GM12878 (cell line): ENCODE measurements at regions of chr4 and their contacts with region 1.

Region 1: DNA sequence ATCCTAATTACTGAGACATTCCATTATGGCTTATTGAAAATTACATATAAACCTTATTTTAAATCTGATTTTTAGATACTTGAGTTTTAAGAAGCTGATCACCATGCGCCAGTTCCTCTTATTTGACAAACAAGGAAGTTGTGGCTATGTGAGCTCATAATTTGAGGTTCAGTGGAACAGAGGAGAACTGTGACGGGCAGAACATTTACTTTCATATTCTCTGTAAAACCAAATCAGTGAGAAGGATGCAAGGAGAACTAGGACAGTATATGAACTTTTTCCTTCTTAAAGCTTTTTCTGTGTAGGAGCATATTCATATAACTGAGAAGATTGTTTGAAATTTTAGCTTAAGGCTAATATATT is 25.3 kb downstream of the STIM2 start:
- DNase-seq: peak; percentile 65
- ATAC-seq: peak; percentile 81
- H3K4me3 ChIP-seq: peak overlapping the region; percentile 45; the same call in 1 of the 2 replicates
- H3K27ac ChIP-seq: peak overlapping the region; percentile 89
- H3K4me1 ChIP-seq: peaks cover 33% of the 10 kb centered on the region
- H3K27me3 ChIP-seq: no peaks in the 10 kb centered on the region
- CTCF ChIP-seq: no peak
- EP300 ChIP-seq: peak; percentile 29 to 81; a peak in 3 of 4 replicates
- POLR2A ChIP-seq: no peak
- RAD21 ChIP-seq: 0 out of 2 replicates have a peak, but pooled peaks have one; percentile 17

Region 2: DNA sequence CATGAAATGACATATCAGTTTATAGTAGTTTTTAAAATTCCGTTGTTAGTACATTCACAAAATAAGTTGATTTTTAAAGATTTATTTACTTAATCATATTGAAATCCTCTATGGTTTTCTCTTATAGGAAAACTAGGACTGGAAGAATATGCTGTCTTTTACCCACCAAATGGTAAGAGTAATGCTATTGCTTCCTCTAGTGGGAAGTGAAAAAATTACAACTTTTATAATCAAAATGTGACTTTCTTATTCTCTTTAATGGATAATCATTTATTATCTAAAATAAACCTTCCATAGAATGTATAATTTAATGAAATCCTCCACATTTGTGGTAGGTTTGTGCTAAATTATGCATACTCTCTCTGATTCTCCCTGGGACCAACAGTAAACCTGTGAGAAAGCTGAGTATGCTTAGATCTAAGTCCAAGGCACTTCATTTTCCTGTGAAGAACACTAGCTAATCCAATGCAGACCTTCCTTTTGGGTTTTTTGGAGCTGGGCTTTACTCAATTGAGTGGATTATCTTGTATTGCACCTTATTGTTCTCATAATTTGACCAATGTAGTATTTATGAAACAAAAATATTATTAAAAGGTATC is 165.8 kb before region 1 on chr4:
- CTCF ChIA-PET with region 1: no interaction called
- POLR2A ChIA-PET with region 1: no interaction called
- RAD21 ChIA-PET with region 1: no interaction called
- SMC1A ChIA-PET with region 1: no interaction called
- in situ Hi-C with region 1: no loop called
- intact Hi-C with region 1: no loop called
- DNase-seq: no peak
- ATAC-seq: no peak
- H3K4me3 ChIP-seq: no peak overlapping the region
- H3K27ac ChIP-seq: no peak overlapping the region
- H3K4me1 ChIP-seq: no peaks in the 10 kb centered on the region
- H3K27me3 ChIP-seq: no peaks in the 10 kb centered on the region
- CTCF ChIP-seq: peak in 2 of 3 experiments; percentile 34 to 40; a peak in 3 of 6 replicates
- EP300 ChIP-seq: no peak
- POLR2A ChIP-seq: no peak
- RAD21 ChIP-seq: peak; percentile 78

Region 3: DNA sequence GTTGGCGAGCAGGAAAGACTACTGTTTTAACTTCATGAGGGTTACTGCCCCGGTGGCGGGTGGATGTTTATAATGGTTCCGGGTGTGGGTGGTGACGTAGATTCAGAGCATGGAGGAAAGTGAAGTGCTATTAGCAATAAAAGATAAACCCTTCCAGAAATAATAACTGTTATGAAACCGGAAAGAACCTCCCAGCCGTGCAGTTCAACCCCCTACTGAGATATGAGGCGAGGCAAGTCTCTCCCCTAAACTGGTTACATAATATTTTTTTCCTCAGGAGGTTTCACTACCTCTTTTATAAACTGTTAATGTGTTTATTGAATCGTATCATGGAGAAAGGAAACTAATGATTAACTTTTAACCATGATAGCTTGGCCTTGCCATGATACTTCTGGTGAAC is 59.2 kb before region 1 on chr4:
- CTCF ChIA-PET with region 1: no interaction called
- POLR2A ChIA-PET with region 1: interaction called, 4 read pairs
- RAD21 ChIA-PET with region 1: interaction called, 12 read pairs
- SMC1A ChIA-PET with region 1: interaction called, 5 read pairs
- in situ Hi-C with region 1: no loop called
- intact Hi-C with region 1: no loop called
- DNase-seq: peak; percentile 72
- ATAC-seq: peak; percentile 94
- H3K4me3 ChIP-seq: 0 out of 2 replicates have a peak overlapping the region, but pooled peaks have one; percentile 31
- H3K27ac ChIP-seq: peak overlapping the region; percentile 20; the same call in 1 of the 2 replicates
- H3K4me1 ChIP-seq: peaks cover 21% of the 10 kb centered on the region
- H3K27me3 ChIP-seq: no peaks in the 10 kb centered on the region
- CTCF ChIP-seq: no peak
- EP300 ChIP-seq: peak; percentile 91 to 93
- POLR2A ChIP-seq: no peak
- RAD21 ChIP-seq: no peak

Region 4: DNA sequence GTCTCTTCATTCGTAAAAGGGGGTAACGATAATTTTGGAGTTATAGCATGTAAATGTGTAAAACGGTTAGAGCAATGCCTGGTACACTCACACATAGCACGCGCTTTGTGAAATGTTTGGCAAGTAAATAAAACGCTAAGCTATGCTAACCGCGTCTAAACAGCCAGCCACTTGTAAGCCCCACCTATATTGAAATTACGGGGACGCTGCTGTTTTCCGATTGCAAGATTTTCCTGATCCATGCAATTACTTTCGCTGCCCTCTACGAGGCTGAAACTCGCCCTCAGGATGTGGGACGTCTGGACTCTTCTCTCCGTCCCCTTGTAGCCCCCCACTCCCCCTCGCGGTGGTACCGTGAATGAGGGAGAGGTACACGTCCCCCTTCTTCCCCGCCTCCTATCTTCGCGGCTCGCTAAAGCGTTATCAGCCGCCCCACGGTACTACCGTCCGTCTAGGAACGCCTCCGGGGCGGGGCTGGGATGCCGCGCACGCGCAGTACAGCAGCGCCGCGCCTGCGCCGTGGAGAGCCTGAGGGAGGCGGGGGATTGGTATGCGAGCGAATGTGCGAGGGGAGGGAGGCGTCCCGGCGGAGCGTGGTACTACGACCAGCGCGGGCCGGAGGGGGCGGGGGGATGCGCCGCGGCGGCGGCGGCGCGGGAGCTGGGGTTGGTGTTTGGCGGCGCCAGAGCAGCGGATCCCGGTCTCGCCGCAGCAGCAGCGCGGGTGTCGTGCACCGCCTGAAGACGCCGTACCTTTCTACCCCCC is 25.6 kb before region 1 on chr4 and contains the start of gene STIM2:
- CTCF ChIA-PET with region 1: interaction called, 8 read pairs
- POLR2A ChIA-PET with region 1: interaction called, 51 read pairs
- RAD21 ChIA-PET with region 1: interaction called, 81 read pairs
- SMC1A ChIA-PET with region 1: interaction called, 116 read pairs
- in situ Hi-C with region 1: no loop called
- intact Hi-C with region 1: loop called (anchors 1 kb)
- DNase-seq: peak; percentile 91
- ATAC-seq: peak; percentile 71
- H3K4me3 ChIP-seq: peak within 1 kb of the TSS; percentile 84
- H3K27ac ChIP-seq: peak within 1 kb of the TSS; percentile 72
- H3K4me1 ChIP-seq: peaks cover 19% of the 10 kb centered on the region
- H3K27me3 ChIP-seq: no peaks in the 10 kb centered on the region
- CTCF ChIP-seq: peak; percentile 40 to 41 (median 41); a peak in 4 of 6 replicates
- EP300 ChIP-seq: no peak
- POLR2A ChIP-seq: peak; percentile 90
- RAD21 ChIP-seq: peak; percentile 58
- polyA plus RNA-seq, gene STIM2: 4.7 to 10.3 TPM

Region 5: DNA sequence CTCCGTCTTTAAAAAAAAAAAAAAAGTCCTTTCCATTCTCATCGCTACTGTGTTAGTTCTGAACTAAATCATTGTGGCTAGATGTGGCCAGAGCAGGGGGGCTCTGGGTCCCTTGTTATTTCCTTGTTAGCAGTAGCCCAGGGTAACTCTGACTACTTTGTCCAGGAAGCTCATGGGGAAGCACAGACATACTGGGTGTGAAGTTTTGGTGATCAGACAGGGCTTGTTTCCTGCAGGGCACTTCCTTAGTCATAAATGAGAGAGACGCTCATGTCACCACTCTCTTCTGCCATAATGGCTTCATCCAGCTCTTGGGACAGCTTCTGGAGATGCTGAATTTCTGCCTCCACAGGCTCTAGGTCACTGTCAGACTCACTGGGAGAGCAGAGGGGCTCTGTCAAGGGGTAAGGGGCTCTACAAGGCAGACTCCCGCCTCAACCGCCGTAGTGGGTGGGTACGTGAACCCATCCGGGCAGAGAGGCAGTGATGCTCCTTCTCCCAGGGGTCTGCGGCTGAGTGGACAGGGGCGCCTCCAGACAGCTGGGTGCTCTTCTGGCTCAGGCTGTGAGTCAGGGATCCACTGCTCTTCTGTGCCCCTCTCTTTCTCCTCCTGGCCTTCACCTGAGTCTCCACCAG is 12.4 kb before region 1 on chr4:
- CTCF ChIA-PET with region 1: interaction called, 7 read pairs
- POLR2A ChIA-PET with region 1: interaction called, 10 read pairs
- RAD21 ChIA-PET with region 1: interaction called, 81 read pairs
- SMC1A ChIA-PET with region 1: interaction called, 116 read pairs
- in situ Hi-C with region 1: no loop called
- intact Hi-C with region 1: no loop called
- DNase-seq: no peak
- ATAC-seq: peak; percentile 81
- H3K4me3 ChIP-seq: no peak overlapping the region
- H3K27ac ChIP-seq: no peak overlapping the region
- H3K4me1 ChIP-seq: no peaks in the 10 kb centered on the region; the same call in 1 of the 2 replicates
- H3K27me3 ChIP-seq: no peaks in the 10 kb centered on the region
- CTCF ChIP-seq: no peak
- EP300 ChIP-seq: no peak
- POLR2A ChIP-seq: no peak
- RAD21 ChIP-seq: no peak

Region 6: DNA sequence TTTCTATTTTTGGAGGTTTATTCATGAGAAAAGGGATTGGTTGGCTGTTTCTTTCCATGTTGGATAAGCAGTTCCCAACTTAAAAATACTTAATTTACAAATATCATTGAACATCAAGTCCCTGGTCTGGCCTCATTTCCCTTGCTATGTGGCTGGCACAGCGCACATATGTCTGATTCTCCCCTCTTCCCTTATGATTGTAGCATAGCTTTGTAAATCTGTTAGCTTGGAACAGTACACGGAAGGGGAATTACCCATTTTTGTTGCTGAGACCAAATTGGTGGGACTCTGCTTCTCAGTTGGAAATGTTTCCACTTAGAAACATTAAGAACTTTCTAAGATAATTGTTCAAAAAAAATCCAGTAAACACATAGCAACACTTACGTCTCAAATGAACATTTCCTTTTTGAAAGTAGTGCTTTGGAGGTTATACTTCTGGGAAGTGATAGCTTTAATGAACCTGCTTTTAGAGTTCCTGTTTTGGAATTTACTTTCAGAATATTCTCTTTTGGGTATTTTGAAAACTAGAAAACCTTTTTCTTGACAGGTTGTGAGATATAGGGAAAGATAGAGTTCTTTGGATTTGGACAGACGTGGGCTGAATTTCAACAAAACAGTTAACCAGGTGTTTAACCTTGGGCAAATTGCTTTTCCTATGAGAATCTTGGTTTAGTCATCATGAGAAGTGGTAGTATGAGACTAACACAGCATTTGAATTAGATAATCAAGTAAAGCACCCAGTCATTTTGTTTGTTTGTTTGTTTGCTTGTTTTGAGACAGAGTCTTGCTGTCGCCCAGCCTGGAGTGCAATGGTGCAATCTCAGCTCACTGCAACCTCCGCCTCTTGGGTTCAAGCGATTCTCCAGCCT is 22.1 kb after region 1 on chr4:
- CTCF ChIA-PET with region 1: interaction called, 4 read pairs
- POLR2A ChIA-PET with region 1: interaction called, 5 read pairs
- RAD21 ChIA-PET with region 1: interaction called, 3 read pairs
- SMC1A ChIA-PET with region 1: interaction called, 10 read pairs
- in situ Hi-C with region 1: no loop called
- intact Hi-C with region 1: no loop called
- DNase-seq: no peak
- ATAC-seq: peak; percentile 40
- H3K4me3 ChIP-seq: no peak overlapping the region
- H3K27ac ChIP-seq: no peak overlapping the region; the same call in 1 of the 2 replicates
- H3K4me1 ChIP-seq: peaks cover 21% of the 10 kb centered on the region
- H3K27me3 ChIP-seq: no peaks in the 10 kb centered on the region
- CTCF ChIP-seq: no peak
- EP300 ChIP-seq: no peak
- POLR2A ChIP-seq: no peak
- RAD21 ChIP-seq: no peak

Region 7: GRCh38 chr4:26985873-26986272 is 100.0 kb after region 1 on chr4:
- CTCF ChIA-PET with region 1: interaction called, 4 read pairs
- POLR2A ChIA-PET with region 1: interaction called, 33 read pairs
- RAD21 ChIA-PET with region 1: interaction called, 82 read pairs
- SMC1A ChIA-PET with region 1: interaction called, 92 read pairs
- in situ Hi-C with region 1: loop called (anchors 10 kb)
- intact Hi-C with region 1: no loop called
- DNase-seq: peak; percentile 44
- ATAC-seq: peak; percentile 96
- H3K4me3 ChIP-seq: no peak overlapping the region
- H3K27ac ChIP-seq: no peak overlapping the region
- H3K4me1 ChIP-seq: peaks cover 14% of the 10 kb centered on the region
- H3K27me3 ChIP-seq: no peaks in the 10 kb centered on the region
- CTCF ChIP-seq: no peak
- EP300 ChIP-seq: 0 out of 4 replicates have a peak, but pooled peaks of 1 of the 2 experiments have one; percentile 21
- POLR2A ChIP-seq: no peak
- RAD21 ChIP-seq: no peak

Region 8: DNA sequence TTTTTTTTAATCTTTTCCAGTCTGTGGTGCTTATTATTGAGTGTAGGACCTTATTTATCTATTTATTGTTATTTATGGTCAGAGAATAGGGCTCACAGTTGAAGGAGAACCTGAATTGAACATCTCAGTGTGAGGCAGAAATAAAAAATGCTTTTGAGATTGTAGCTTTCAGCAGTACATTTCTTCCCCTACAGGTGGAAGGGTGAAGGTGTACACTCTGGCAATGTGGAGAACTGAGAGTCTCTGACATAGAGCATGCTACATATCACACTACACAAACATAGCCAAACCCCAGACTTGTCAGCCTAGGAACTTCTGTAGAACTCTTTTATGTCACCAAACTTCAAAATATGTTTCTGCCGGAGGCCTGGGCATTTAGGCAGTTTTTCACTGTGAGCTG is 114.9 kb after region 1 on chr4:
- CTCF ChIA-PET with region 1: interaction called, 3 read pairs
- POLR2A ChIA-PET with region 1: interaction called, 4 read pairs
- RAD21 ChIA-PET with region 1: interaction called, 7 read pairs
- SMC1A ChIA-PET with region 1: interaction called, 19 read pairs
- in situ Hi-C with region 1: loop called (anchors 10 kb)
- intact Hi-C with region 1: no loop called
- DNase-seq: no peak
- ATAC-seq: peak; percentile 98
- H3K4me3 ChIP-seq: no peak overlapping the region
- H3K27ac ChIP-seq: no peak overlapping the region
- H3K4me1 ChIP-seq: peaks cover 6% of the 10 kb centered on the region; the same call in 1 of the 2 replicates
- H3K27me3 ChIP-seq: no peaks in the 10 kb centered on the region
- CTCF ChIP-seq: peak; percentile 51 to 64 (median 55)
- EP300 ChIP-seq: no peak
- POLR2A ChIP-seq: no peak
- RAD21 ChIP-seq: peak; percentile 82

Region 9: GRCh38 chr4:27176400-27176799 is 290.5 kb after region 1 on chr4:
- CTCF ChIA-PET with region 1: no interaction called
- POLR2A ChIA-PET with region 1: no interaction called
- RAD21 ChIA-PET with region 1: no interaction called
- SMC1A ChIA-PET with region 1: no interaction called
- in situ Hi-C with region 1: no loop called
- intact Hi-C with region 1: no loop called
- DNase-seq: no peak
- ATAC-seq: peak; percentile 57; the same call in 2 of the 3 replicates
- H3K4me3 ChIP-seq: no peak overlapping the region
- H3K27ac ChIP-seq: no peak overlapping the region
- H3K4me1 ChIP-seq: no peaks in the 10 kb centered on the region
- H3K27me3 ChIP-seq: no peaks in the 10 kb centered on the region
- CTCF ChIP-seq: peak in 2 of 3 experiments; percentile 22 to 36; a peak in 3 of 6 replicates
- EP300 ChIP-seq: no peak
- POLR2A ChIP-seq: no peak
- RAD21 ChIP-seq: 0 out of 2 replicates have a peak, but pooled peaks have one; percentile 32